HCT116 (cell line): ENCODE measurements at regions of chr18 and their contacts with region 1.

Region 1: DNA sequence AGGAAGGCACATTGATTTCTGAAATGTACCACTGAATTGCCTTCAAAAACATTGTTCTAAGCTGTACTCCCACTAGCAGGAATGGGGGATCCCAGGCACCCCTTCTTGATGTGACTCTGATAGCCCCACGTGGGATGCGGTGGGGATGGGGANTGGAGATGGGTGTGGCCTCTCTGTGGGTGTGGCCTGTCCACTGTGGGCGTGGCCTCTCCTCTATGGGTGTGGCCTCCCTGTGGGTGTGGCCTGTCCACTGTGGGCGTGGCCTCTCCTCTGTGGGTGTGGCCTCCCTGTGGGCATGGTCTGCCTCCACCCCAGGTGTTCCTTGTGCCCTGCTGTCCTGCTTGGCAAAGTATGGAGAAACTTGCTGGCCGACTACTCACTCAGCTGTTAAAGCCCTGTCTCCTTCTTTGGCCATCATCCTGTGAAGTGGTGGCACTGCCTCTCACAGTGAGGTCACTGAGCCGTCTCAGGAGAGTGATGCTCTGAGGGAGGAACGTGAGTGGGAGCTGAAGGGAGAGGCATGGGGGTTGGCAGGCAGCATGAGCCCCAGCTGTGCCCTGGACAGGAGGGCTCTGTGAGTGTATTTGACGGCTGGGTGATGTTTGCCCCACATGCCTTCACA is 6.7 kb upstream of the PARD6G start:
- DNase-seq: peak; percentile 23
- ATAC-seq: peak; percentile 92
- H3K4me3 ChIP-seq: no peak overlapping the region
- H3K27ac ChIP-seq: no peak overlapping the region
- H3K4me1 ChIP-seq: no peaks in the 10 kb centered on the region
- H3K27me3 ChIP-seq: no peaks in the 10 kb centered on the region
- CTCF ChIP-seq: no peak
- POLR2A ChIP-seq: no peak
- RAD21 ChIP-seq: no peak

Region 2: DNA sequence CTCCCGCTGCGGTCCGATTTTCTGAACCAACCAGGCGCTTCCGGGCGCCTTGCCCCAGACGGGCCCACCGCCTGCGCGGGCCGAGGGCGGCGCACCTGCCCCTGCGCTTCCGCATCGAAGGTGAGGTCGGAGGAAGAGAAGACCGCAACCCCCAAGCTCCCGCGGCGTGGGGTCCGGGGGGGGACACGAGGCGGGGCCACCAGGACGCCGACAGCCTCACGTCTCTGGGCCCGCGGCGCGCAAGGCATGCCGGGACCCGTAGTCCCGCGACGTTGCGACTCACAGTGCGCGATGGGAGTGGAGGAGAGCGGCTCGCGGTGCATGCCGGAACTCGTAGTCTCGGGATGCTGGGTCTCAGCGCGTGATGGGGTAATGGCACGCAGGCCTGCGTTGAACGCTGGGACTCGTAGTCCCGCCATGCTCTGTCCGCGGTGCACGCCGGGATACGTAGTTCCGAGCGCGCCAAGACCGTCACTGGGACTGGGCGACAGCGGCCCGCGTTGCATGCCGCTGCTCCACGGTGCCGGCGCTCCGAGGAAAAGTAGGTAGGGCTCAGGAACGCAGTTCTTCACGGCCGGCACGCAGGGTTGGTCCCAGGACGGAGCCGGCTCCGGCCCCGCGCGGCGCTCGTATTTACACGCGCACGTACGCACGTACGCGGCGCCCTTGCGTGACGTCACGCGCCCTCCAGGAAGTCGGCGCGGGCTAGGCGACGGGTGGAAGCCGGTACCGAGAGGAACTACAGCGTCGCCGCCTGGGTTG is 574.7 kb before region 1 on chr18 and contains the start of gene CTDP1:
- CTCF ChIA-PET with region 1: no interaction called
- POLR2A ChIA-PET with region 1: no interaction called
- RAD21 ChIA-PET with region 1: no interaction called
- intact Hi-C with region 1: no loop called
- DNase-seq: peak; percentile 97
- ATAC-seq: peak; percentile 93
- H3K4me3 ChIP-seq: peak within 1 kb of the TSS; percentile 87 to 88
- H3K27ac ChIP-seq: peak within 1 kb of the TSS; percentile 94
- H3K4me1 ChIP-seq: peaks cover 11 to 21% of the 10 kb centered on the region in 2 experiments; a peak in 3 of 4 replicates
- H3K27me3 ChIP-seq: no peaks in the 10 kb centered on the region
- CTCF ChIP-seq: no peak
- POLR2A ChIP-seq: peak; percentile 63
- RAD21 ChIP-seq: no peak
- total RNA-seq, gene CTDP1: 24.9 TPM

Region 3: GRCh38 chr18:80157708-80158343 is 96.2 kb before region 1 on chr18:
- CTCF ChIA-PET with region 1: interaction called, 6 read pairs
- POLR2A ChIA-PET with region 1: no interaction called
- RAD21 ChIA-PET with region 1: no interaction called
- intact Hi-C with region 1: loop called (anchors 1 kb)
- DNase-seq: peak; percentile 66
- ATAC-seq: peak; percentile 74
- H3K4me3 ChIP-seq: no peak overlapping the region
- H3K27ac ChIP-seq: no peak overlapping the region
- H3K4me1 ChIP-seq: no peaks in the 10 kb centered on the region
- H3K27me3 ChIP-seq: no peaks in the 10 kb centered on the region
- CTCF ChIP-seq: peak; percentile 67 to 97 (median 95); a peak in 5 of 6 replicates
- POLR2A ChIP-seq: no peak
- RAD21 ChIP-seq: peak; percentile 81